Heart right ventricle (tissue), 16 donors: ENCODE measurements at regions of chrX and their contacts with region 1.

Region 1: DNA sequence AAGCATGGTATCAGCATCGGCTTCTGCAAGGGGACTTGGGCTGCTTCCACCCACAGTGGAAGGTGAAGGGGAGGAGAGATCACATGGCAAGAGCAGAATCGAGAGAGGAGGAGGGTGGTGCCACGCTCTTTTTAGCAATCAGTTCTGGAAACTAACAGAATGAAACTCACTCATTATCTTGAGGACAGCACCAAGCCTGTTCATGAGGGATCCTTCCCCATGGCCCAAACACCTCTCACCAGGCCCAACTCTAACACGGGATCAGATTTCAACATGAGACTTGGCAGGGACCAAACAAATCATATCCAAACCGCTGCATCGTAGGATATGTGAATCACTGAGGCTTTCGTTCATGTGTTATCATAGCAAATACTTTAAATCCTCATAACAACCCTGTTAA is 125.5 kb downstream of the GPC3 start:
- DNase-seq: no peak
- ATAC-seq: peak in 3 of 8 donors; percentile 33 to 69 (median 42)
- H3K4me3 ChIP-seq: no peak overlapping the region
- H3K27ac ChIP-seq: no peak overlapping the region
- H3K4me1 ChIP-seq: no peaks in the 10 kb centered on the region
- H3K27me3 ChIP-seq: peaks cover 0 to 40% (median 0%) of the 10 kb centered on the region in 7 donors
- CTCF ChIP-seq: no peak

Region 2: GRCh38 chrX:133985164-133985966 is 125.5 kb after region 1 on chrX and contains the start of gene GPC3:
- intact Hi-C with region 1: loop called in 1 of 10 experiments (anchors 5 kb)
- DNase-seq: peak in 1 of 2 donors; percentile 16
- ATAC-seq: peak in 6 of 8 donors; percentile 49 to 77 (median 66)
- H3K4me3 ChIP-seq: peak within 1 kb of the TSS in 9 of 10 donors; percentile 7 to 44 (median 38)
- H3K27ac ChIP-seq: no peak within 1 kb of the TSS
- H3K4me1 ChIP-seq: peaks cover 0 to 6% (median 0%) of the 10 kb centered on the region in 9 donors
- H3K27me3 ChIP-seq: peaks cover 0 to 72% (median 10%) of the 10 kb centered on the region in 7 donors
- CTCF ChIP-seq: no peak
- total RNA-seq, gene GPC3: 1.1 to 5.6 (median 3.4) TPM